ENCODE measurements at regions of chr22 and their contacts with region 1.

Region 1: GRCh38 chr22:41873391-41873790 is 40.5 kb downstream of the SREBF2 start:
- DNase-seq: no peak
- ATAC-seq: no peak
- H3K4me3 ChIP-seq: no peak overlapping the region
- H3K27ac ChIP-seq: no peak overlapping the region
- H3K4me1 ChIP-seq: no peaks in the 10 kb centered on the region
- H3K27me3 ChIP-seq: no peaks in the 10 kb centered on the region
- CTCF ChIP-seq: no peak

Region 2: GRCh38 chr22:41893591-41894375 is 20.4 kb after region 1 on chr22:
- CTCF ChIA-PET with region 1: no interaction called
- POLR2A ChIA-PET with region 1: interaction called, 11 read pairs
- intact Hi-C with region 1: no loop called
- DNase-seq: no peak
- ATAC-seq: no peak
- H3K4me3 ChIP-seq: no peak overlapping the region
- H3K27ac ChIP-seq: no peak overlapping the region
- H3K4me1 ChIP-seq: no peaks in the 10 kb centered on the region
- H3K27me3 ChIP-seq: no peaks in the 10 kb centered on the region
- CTCF ChIP-seq: no peak

Measured in PC-3 (cell line).